PC-9 (cell line): ENCODE measurements at regions of chr11 and their contacts with region 1.

Region 1: DNA sequence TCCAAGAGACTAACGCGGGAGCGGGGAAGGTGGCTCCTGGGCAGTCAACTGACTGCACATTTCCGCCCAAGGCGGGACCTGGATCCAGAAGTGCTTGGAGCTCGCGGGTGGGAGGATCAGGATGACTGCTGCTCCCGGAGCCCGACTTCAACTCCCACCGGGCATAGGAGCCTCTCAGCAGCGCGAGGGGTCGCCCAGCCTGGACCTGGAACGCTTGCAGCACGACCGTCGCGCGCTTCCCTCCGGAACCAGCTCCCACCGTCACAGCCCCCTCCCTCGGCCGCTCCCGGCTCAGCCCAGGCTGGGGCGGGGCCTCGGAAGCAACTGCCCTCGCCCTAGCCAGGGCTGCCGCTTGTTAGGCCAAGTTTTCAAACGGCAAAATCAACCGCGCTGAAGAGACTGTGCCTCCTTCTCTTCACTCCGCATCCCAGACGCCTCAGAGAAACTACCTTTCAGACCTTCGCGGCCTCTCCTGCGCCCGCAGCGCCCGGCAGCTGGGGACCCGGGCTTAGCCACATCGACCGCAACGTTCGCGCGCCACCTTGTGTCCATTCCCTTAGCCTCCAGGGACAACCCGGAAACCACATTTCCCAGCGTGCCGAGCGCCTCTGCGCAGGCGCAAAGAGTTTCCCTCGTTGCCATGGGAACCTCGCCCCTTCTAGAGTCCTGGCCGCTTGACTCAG is 14.0 kb downstream of the SSH3 start:
- DNase-seq: peak; percentile 96 to 99
- H3K4me3 ChIP-seq: peak overlapping the region; percentile 76
- H3K27ac ChIP-seq: peak overlapping the region; percentile 67
- H3K4me1 ChIP-seq: peaks cover 42% of the 10 kb centered on the region
- H3K27me3 ChIP-seq: no peaks in the 10 kb centered on the region
- CTCF ChIP-seq: peak; percentile 96

Region 2: DNA sequence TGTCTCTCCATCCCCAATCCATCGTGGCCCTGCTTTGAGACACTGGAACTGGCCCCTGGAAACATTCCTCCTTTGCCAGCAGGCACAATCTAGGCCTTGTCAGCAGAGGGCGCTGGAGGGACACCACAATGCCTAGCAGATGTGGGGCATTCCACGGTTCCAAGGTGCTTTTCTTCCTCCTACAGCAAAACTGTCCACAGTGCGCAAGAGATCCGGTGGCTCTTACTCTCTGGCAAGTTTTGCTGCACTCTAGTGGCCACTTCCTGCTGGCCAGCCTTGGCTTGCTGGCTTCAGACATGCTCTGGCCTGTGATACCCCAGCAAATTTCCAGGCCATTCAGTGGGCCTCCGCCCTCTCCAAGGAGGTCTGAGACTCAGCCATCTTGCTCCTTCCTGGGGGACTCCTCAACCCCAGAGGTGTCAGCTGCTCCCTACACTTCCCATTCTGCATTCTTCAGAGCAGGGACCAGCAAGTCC is 622.6 kb before region 1 on chr11:
- CTCF ChIA-PET with region 1: no interaction called
- POLR2A ChIA-PET with region 1: no interaction called
- intact Hi-C with region 1: loop called (anchors 1 kb)
- DNase-seq: peak; percentile 94 to 96
- H3K4me3 ChIP-seq: no peak overlapping the region
- H3K27ac ChIP-seq: no peak overlapping the region
- H3K4me1 ChIP-seq: no peaks in the 10 kb centered on the region
- H3K27me3 ChIP-seq: no peaks in the 10 kb centered on the region
- CTCF ChIP-seq: peak; percentile 98

Region 3: DNA sequence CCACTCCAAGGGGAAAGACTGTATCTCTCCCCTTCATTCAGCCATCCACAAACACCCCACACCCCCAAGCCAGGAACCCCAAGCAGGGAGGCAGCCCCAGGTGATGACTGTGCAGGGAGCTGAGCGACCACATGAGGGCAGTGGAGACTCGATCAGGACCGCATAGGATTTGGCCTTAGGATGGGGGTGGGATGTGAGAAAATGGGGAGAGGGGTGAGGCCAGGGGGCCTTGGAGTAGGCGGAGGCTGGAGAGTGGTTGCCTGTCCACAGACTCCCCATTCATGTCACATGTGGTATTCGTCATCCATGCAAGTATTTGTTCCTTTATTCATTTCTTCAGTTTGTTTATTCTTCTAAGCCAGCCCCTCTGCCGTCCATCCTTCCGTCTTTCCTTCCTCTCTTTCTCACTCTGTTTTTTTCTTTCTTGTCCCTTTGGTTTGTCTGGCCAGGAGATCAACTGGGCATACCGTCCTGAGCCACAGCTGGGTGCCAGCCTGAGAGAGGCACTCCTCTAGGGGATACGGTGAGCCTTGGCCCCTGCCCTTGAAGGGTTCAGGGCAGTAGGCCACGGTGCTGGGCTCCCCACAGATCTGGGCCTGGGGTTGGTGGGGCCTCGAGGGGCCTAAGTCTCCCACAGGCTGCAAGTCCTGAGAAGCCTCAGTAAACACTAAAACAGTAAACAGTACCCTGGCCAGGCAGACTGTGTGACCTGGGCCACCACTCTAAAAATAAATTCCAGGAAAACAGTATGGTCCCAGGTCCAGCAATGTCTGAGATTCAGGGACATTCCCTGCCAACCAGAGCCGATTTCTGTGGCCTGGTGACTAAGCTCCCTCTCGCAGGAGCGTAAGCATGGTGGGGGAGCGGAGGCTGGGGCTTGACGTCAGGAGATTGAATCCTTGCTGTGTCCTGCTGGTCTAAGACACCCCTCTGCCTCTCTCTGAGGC is 263.2 kb before region 1 on chr11:
- CTCF ChIA-PET with region 1: interaction called, 7 read pairs
- POLR2A ChIA-PET with region 1: interaction called, 9 read pairs
- intact Hi-C with region 1: loop called (anchors 1 kb)
- DNase-seq: peak; percentile 52 to 77
- H3K4me3 ChIP-seq: no peak overlapping the region
- H3K27ac ChIP-seq: peak overlapping the region; percentile 64
- H3K4me1 ChIP-seq: peaks cover 48% of the 10 kb centered on the region
- H3K27me3 ChIP-seq: no peaks in the 10 kb centered on the region
- CTCF ChIP-seq: peak; percentile 86

Region 4: DNA sequence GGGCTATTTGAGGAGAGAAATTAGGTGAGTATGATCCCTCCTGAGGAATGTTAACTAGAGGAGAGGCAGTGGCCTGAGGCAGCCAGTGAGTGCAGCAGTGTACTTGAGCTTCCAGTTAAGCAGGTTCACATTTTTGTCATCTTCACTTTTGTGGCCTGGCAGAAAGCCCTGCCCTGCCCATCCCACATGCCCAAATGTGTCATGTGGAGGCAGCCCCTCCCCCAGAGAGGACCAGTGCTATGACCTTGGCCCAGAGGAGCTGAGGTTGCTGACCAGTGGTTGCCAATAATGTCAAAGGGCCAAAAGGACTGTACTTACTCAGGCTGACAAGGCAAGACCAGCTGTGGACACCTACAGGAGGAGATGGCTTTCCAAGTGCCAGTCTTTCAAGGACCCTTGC is 68.7 kb before region 1 on chr11:
- CTCF ChIA-PET with region 1: interaction called, 10 read pairs
- POLR2A ChIA-PET with region 1: interaction called, 6 read pairs
- intact Hi-C with region 1: no loop called
- DNase-seq: peak; percentile 97 to 98
- H3K4me3 ChIP-seq: no peak overlapping the region; the same call in 1 of the 2 replicates
- H3K27ac ChIP-seq: peak overlapping the region; percentile 81
- H3K4me1 ChIP-seq: peaks cover 73% of the 10 kb centered on the region
- H3K27me3 ChIP-seq: no peaks in the 10 kb centered on the region
- CTCF ChIP-seq: no peak

Region 5: DNA sequence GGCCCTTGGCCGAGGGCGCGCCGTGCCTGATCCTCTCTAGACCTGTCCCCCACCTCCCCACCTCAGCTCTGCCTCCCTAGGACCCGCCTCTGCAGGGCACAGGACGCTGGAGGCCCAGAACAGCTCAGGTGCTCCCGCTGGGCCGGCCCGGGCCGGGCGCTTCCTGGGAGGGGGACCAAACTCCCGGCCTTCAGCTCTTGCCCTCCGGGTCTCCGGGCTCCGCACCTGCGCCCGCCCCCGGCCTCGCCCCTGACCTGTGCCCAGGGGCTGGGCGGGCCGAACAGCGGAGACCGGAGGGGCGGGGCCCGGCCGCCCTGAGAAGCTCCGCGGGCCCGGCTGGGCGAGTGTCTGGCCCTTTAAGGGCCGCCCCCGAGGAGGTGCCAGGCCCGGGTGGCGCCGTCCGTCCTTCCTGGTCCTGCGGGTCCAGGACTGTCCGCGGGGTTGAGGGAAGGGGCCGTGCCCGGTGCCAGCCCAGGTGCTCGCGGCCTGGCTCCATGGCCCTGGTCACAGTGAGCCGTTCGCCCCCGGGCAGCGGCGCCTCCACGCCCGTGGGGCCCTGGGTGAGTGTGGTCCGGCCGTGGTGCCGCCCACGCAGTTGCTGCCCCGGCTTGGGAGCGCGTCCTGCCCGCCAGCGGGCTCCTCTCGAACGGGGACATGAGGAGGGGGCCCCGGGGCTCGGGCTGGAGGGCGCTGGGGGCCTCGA is 14.1 kb before region 1 on chr11 and contains the start of gene SSH3:
- CTCF ChIA-PET with region 1: interaction called, 11 read pairs
- POLR2A ChIA-PET with region 1: interaction called, 9 read pairs
- intact Hi-C with region 1: loop called (anchors 1 kb)
- DNase-seq: peak; percentile 81 to 96
- H3K4me3 ChIP-seq: peak within 1 kb of the TSS; percentile 90
- H3K27ac ChIP-seq: peak within 1 kb of the TSS; percentile 68
- H3K4me1 ChIP-seq: peaks cover 29% of the 10 kb centered on the region
- H3K27me3 ChIP-seq: no peaks in the 10 kb centered on the region
- CTCF ChIP-seq: no peak
- total RNA-seq, gene SSH3: 97.8 and 124 TPM in 2 replicates

Region 6: GRCh38 chr11:67382276-67383136 is 65.2 kb after region 1 on chr11:
- CTCF ChIA-PET with region 1: interaction called, 6 read pairs
- POLR2A ChIA-PET with region 1: no interaction called
- intact Hi-C with region 1: loop called (anchors 2 kb)
- DNase-seq: peak; percentile 66 to 84
- H3K4me3 ChIP-seq: no peak overlapping the region
- H3K27ac ChIP-seq: no peak overlapping the region
- H3K4me1 ChIP-seq: peaks cover 64% of the 10 kb centered on the region
- H3K27me3 ChIP-seq: no peaks in the 10 kb centered on the region
- CTCF ChIP-seq: peak; percentile 99

Region 7: GRCh38 chr11:67507864-67508485 is 190.6 kb after region 1 on chr11 and contains the start of gene CDK2AP2:
- CTCF ChIA-PET with region 1: no interaction called
- POLR2A ChIA-PET with region 1: no interaction called
- intact Hi-C with region 1: no loop called
- DNase-seq: peak; percentile 99 to 100
- H3K4me3 ChIP-seq: peak within 1 kb of the TSS; percentile 66
- H3K27ac ChIP-seq: peak within 1 kb of the TSS; percentile 79
- H3K4me1 ChIP-seq: peaks cover 33% of the 10 kb centered on the region
- H3K27me3 ChIP-seq: peaks cover 4% of the 10 kb centered on the region; the same call in 1 of the 2 replicates
- CTCF ChIP-seq: no peak
- total RNA-seq, gene CDK2AP2: 80.0 and 89.3 TPM in 2 replicates